ENCODE measurements at regions of chr7 and their contacts with region 1.

Region 1: DNA sequence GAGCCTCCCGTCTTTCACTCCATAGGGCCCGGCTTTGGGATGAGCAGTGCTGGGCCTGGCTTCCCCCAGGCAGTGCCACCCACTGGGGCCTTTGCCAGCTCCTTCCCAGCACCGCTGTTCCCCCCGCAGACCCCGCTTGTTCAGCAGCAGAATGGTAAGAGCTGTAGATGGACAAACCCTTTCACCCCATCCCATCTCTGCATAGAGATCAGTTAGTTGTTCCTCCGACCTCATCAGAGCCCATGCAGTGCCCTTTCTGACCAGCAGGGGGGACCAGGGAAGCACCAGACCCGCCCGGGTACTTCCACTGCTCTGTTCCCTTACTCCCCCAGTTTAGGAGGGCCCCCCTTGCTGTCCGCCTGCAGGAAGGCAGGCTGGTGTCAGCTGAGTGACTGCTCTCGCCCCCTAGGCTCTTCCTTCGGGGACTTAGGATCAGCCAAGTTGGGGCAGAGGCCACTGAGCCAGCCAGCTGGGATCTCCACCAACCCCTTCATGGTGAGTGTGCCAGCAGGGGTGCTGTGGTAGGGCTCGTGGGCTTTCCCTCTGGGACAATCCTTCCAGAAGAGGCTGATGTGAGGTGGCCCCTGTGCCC is 9.8 kb downstream of the SAP25 start:
- DNase-seq: peak in 1 of 2 experiments; percentile 80
- H3K4me3 ChIP-seq: no peak overlapping the region
- H3K27ac ChIP-seq: no peak overlapping the region
- H3K4me1 ChIP-seq: 0 out of 2 replicates have a peak, but pooled peaks cover 8% of the 10 kb centered on the region
- H3K27me3 ChIP-seq: no peaks in the 10 kb centered on the region
- CTCF ChIP-seq: peak; percentile 96

Region 2: GRCh38 chr7:99971242-99971641 is 592.7 kb before region 1 on chr7:
- CTCF ChIA-PET with region 1: no interaction called
- POLR2A ChIA-PET with region 1: no interaction called
- intact Hi-C with region 1: no loop called
- DNase-seq: no peak
- H3K4me3 ChIP-seq: no peak overlapping the region
- H3K27ac ChIP-seq: no peak overlapping the region
- H3K4me1 ChIP-seq: no peaks in the 10 kb centered on the region
- H3K27me3 ChIP-seq: peaks cover 38% of the 10 kb centered on the region
- CTCF ChIP-seq: no peak

Region 3: DNA sequence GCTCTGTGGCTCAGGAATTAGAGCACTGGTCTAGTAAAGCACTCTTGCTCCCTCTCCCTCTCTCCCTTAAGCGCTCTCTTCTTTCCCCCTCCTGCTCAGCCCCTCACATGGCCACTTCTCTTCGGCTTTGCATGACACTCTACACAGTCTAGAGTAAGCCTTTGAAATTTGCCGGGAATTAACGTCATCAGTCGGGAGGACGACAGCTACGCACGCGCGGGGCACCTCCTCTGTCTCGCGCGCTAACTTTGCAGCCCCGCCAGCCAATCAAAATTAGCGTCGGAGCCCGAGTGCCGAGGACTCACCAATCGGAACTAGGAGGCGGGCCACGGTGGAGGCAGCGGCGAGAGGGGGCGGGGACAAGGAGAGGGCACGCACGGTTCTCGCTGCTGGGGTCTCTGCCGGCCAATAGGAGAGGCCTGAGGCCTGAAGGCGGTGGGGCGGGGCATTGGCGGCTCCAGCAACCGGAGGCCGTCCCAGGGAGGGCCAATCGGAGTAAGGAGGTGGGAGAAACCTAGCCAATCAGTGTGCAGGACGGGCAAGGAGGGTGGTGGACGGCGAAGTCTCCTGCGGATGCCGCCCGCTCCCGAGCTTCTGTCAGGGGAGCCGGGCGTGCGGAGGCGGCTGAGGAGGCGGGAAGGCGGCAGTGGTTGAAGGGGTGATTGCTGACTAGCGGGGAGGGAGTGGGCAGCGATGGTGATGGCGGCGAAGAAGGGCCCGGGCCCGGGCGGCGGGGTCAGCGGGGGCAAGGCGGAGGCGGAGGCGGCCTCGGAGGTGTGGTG is 25.1 kb before region 1 on chr7 and contains the start of gene AGFG2:
- CTCF ChIA-PET with region 1: interaction called, 25 read pairs
- POLR2A ChIA-PET with region 1: no interaction called
- intact Hi-C with region 1: no loop called
- DNase-seq: peak; percentile 99 to 100
- H3K4me3 ChIP-seq: peak within 1 kb of the TSS; percentile 79
- H3K27ac ChIP-seq: peak within 1 kb of the TSS; percentile 42
- H3K4me1 ChIP-seq: peaks cover 44% of the 10 kb centered on the region
- H3K27me3 ChIP-seq: no peaks in the 10 kb centered on the region
- CTCF ChIP-seq: no peak
- total RNA-seq, gene AGFG2: 30.4 and 35.2 TPM in 2 replicates

Region 4: DNA sequence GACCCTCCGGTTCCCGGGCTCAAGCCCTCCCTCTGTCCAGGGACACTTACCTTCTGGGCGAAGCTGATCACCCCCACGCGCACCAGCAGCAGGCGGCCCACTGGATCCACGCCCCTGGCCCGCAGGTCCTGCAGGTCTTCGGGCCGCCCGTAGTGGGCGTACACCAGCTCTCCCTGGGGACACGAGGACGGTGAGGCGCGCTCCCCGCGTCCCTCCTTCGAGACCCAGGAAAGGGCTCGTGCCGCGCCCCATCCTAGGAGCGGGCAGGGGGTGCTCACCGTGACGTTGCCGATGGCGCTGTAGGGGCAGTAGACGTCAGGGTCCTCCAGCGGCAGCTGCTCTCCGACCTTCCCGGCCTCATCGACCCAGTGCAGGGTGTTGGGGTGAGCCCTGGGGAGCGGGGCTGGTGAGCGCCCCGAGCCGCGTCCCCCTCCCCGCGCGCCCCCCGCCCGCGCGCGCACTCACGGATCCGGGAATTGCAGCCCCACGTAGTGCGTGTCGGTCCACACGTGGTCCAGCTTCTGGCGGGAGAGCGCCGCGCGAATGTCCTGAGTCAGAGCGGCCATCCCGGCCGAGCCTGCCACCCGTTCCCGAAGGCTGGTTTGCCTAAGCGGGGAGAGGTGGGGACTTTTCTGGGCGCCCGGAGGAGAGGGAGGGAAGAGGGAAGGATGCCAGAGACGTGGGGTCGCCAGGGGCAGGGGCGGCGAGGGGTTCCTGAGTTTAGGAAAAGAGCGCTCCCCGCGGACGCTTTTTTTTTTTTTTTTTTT is 69.2 kb after region 1 on chr7:
- CTCF ChIA-PET with region 1: interaction called, 17 read pairs
- POLR2A ChIA-PET with region 1: interaction called, 22 read pairs
- intact Hi-C with region 1: no loop called
- DNase-seq: peak in 1 of 2 experiments; percentile 73
- H3K4me3 ChIP-seq: peak overlapping the region; percentile 65
- H3K27ac ChIP-seq: no peak overlapping the region
- H3K4me1 ChIP-seq: no peaks in the 10 kb centered on the region
- H3K27me3 ChIP-seq: no peaks in the 10 kb centered on the region
- CTCF ChIP-seq: peak; percentile 68

Region 5: GRCh38 chr7:100673300-100673941 is 109.5 kb after region 1 on chr7 and contains the start of gene GNB2:
- CTCF ChIA-PET with region 1: interaction called, 7 read pairs
- POLR2A ChIA-PET with region 1: no interaction called
- intact Hi-C with region 1: loop called (anchors 1 kb)
- DNase-seq: peak; percentile 93 to 100
- H3K4me3 ChIP-seq: peak within 1 kb of the TSS; percentile 99
- H3K27ac ChIP-seq: peak within 1 kb of the TSS; percentile 75
- H3K4me1 ChIP-seq: no peaks in the 10 kb centered on the region; the same call in 1 of the 2 replicates
- H3K27me3 ChIP-seq: no peaks in the 10 kb centered on the region
- CTCF ChIP-seq: no peak
- total RNA-seq, gene GNB2: 299 and 326 TPM in 2 replicates

Region 6: DNA sequence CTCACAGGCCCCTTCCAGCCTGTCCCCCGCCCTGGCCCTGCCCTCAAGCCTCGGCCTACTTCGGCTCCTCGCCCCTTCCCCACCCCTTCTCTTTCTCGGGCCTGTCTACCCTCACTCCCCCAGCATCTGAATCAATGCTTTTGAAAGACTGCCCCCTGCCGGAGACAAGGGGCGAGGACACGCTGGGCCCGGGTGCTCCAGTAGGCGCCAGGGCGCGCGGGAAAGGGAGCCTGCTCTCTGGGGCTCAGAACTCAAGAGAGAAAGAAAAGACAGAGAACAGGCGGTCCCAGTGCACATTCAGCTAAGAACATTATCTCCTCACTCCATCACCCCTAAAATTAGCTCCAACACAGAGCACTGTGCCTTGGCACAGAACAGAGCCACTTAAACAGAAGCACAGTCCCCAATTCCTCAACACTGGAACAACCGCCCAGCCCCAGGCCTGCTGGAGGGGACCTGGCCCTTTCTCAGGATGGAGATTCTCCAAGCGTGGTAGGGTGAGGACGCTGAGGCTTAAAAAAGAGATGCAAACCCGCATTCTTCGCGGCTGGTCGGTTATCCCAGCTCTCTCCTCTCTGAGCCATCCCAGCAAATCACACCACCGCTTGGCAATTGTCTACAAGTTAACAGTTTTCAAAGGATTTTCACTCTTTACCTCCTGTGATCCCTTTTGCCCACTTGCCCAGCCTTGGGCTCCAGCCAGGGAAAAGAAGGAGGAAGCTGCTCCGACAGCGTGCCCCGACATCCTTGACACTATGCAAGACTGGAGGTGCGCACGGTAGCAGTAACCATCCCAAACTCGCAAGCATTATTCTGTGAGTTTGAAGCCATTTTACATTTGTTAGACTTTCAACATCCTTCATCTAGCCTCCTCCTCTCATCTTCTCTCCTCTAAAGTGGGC is 128.0 kb after region 1 on chr7:
- CTCF ChIA-PET with region 1: interaction called, 8 read pairs
- POLR2A ChIA-PET with region 1: no interaction called
- intact Hi-C with region 1: loop called (anchors 1 kb)
- DNase-seq: peak in 1 of 2 experiments; percentile 72
- H3K4me3 ChIP-seq: peak overlapping the region; percentile 97; the same call in 1 of the 2 replicates
- H3K27ac ChIP-seq: no peak overlapping the region
- H3K4me1 ChIP-seq: peaks cover 13% of the 10 kb centered on the region
- H3K27me3 ChIP-seq: no peaks in the 10 kb centered on the region
- CTCF ChIP-seq: peak; percentile 95

Measured in PC-9 (cell line).